IMR-90 (cell line): ENCODE measurements at regions of chr22 and their contacts with region 1.

Region 1: DNA sequence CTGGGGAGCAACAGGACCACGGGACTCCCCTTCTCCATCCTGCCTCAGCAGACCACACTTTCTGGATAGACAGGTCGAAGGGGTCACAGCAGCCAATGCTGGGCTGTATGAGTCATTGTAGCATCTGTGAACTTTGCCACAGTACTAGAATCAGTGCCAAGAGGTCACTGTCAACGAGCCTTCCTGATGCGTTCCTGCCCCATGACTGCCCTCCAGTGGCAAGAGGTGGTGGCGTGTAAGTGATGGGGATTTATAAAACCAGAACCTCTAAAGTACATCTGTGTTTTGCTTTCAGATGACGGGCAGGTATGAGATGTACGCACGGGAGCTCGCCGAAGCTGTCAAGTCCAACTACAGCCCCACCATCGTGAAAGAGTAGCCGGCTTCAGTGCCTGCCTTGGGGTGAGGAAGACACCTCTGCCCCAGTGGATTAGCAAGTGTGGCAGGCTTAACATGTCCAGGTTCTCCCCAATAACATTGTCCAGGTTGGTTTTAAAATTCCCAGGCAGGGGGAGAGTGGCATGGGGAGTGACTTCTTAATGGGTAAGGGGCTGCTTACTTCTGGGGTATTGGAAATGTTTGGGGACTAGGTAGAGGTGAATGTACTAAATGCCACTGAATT is 29.4 kb downstream of the GUCD1 start:
- DNase-seq: peak; percentile 65
- ATAC-seq: peak; percentile 94
- H3K4me3 ChIP-seq: no peak overlapping the region
- H3K27ac ChIP-seq: no peak overlapping the region
- H3K4me1 ChIP-seq: peaks cover 2% of the 10 kb centered on the region; the same call in 1 of the 2 replicates
- H3K27me3 ChIP-seq: no peaks in the 10 kb centered on the region; the same call in 1 of the 2 replicates
- CTCF ChIP-seq: peak; percentile 86
- POLR2A ChIP-seq: no peak
- RAD21 ChIP-seq: peak; percentile 90

Region 2: GRCh38 chr22:24189249-24190158 is 336.0 kb before region 1 on chr22:
- CTCF ChIA-PET with region 1: no interaction called
- POLR2A ChIA-PET with region 1: no interaction called
- dilution Hi-C with region 1: no loop called
- in situ Hi-C with region 1: no loop called
- intact Hi-C with region 1: loop called (anchors 5 kb)
- DNase-seq: peak; percentile 50
- ATAC-seq: peak; percentile 100
- H3K4me3 ChIP-seq: no peak overlapping the region
- H3K27ac ChIP-seq: peak overlapping the region; percentile 16
- H3K4me1 ChIP-seq: peaks cover 10% of the 10 kb centered on the region
- H3K27me3 ChIP-seq: no peaks in the 10 kb centered on the region
- CTCF ChIP-seq: peak; percentile 98
- POLR2A ChIP-seq: peak; percentile 61; the same call in 1 of the 2 replicates
- RAD21 ChIP-seq: peak; percentile 99

Region 3: GRCh38 chr22:24325105-24325757 is 200.3 kb before region 1 on chr22:
- CTCF ChIA-PET with region 1: interaction called, 7 read pairs
- POLR2A ChIA-PET with region 1: no interaction called
- dilution Hi-C with region 1: no loop called
- in situ Hi-C with region 1: loop called (anchors 5 kb)
- intact Hi-C with region 1: loop called (anchors 1 kb)
- DNase-seq: peak; percentile 92
- ATAC-seq: peak; percentile 96
- H3K4me3 ChIP-seq: no peak overlapping the region
- H3K27ac ChIP-seq: no peak overlapping the region
- H3K4me1 ChIP-seq: peaks cover 2% of the 10 kb centered on the region; the same call in 1 of the 2 replicates
- H3K27me3 ChIP-seq: no peaks in the 10 kb centered on the region
- CTCF ChIP-seq: peak; percentile 86
- POLR2A ChIP-seq: no peak
- RAD21 ChIP-seq: peak; percentile 85

Region 4: DNA sequence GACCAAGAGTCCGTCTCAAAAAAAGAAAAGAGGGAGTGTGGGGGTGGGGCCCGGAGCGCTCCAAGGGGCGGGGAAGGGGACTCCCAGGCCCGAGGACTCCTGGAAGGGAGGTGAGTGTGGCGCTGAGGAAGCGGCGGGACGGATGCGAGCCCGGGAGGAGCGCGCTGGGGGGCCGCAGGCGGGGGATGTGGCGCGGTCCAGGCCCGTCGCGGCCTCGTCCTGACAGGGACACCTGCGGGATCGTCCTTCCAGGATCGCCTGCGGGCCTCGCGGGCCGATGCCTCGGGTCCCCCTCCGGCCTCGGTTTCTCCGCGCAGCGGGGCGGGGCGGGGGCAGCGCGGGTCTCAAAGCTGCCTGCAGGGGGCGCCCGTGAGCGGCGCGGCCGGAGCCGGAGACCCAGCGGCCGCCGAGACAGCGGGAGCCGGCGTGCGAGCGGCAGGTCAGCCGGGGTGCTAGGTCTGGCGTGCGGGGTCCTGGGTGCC is 102.0 kb before region 1 on chr22:
- CTCF ChIA-PET with region 1: interaction called, 6 read pairs
- POLR2A ChIA-PET with region 1: no interaction called
- dilution Hi-C with region 1: no loop called
- in situ Hi-C with region 1: no loop called
- intact Hi-C with region 1: loop called (anchors 1 kb)
- DNase-seq: no peak
- ATAC-seq: peak; percentile 91
- H3K4me3 ChIP-seq: peak overlapping the region; percentile 68
- H3K27ac ChIP-seq: no peak overlapping the region
- H3K4me1 ChIP-seq: no peaks in the 10 kb centered on the region
- H3K27me3 ChIP-seq: peaks cover 33% of the 10 kb centered on the region
- CTCF ChIP-seq: peak; percentile 83
- POLR2A ChIP-seq: no peak
- RAD21 ChIP-seq: peak; percentile 79